MCF 10A (cell line): ENCODE measurements at regions of chrX and their contacts with region 1.

Region 1: GRCh38 chrX:100674705-100675104 is 30.7 kb downstream of the SRPX2 start:
- DNase-seq: no peak
- H3K4me3 Mint-ChIP-seq: no peak overlapping the region
- H3K27ac Mint-ChIP-seq: no peak overlapping the region
- H3K4me1 Mint-ChIP-seq: no peaks in the 10 kb centered on the region
- H3K27me3 Mint-ChIP-seq: peaks cover 55% of the 10 kb centered on the region
- CTCF ChIP-seq: no peak

Region 2: DNA sequence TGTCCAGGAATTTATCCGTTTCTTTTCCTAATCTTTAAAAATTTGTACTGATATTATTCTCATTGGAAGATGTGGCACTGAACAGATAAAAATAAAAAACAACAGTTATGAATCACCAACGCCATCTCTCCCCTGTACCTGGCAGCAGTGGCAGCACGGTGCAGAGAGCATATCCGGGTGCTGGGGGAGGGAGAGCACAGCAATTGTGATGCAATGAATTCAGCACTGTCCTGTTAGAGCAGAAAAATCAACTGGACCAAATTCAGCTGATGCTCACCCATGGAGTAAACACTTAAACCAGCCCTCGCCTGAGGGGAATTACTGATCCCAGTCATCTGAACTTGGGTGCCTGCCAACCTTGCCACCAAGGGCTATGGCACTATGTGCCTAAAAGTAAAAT is 917.0 kb before region 1 on chrX:
- CTCF ChIA-PET with region 1: no interaction called
- POLR2A ChIA-PET with region 1: no interaction called
- intact Hi-C with region 1: no loop called
- DNase-seq: peak; percentile 39
- H3K4me3 Mint-ChIP-seq: no peak overlapping the region
- H3K27ac Mint-ChIP-seq: no peak overlapping the region
- H3K4me1 Mint-ChIP-seq: no peaks in the 10 kb centered on the region
- H3K27me3 Mint-ChIP-seq: peaks cover 27% of the 10 kb centered on the region
- CTCF ChIP-seq: no peak

Region 3: GRCh38 chrX:100512471-100512870 is 162.2 kb before region 1 on chrX:
- CTCF ChIA-PET with region 1: interaction called, 15 read pairs
- POLR2A ChIA-PET with region 1: no interaction called
- intact Hi-C with region 1: no loop called
- DNase-seq: peak; percentile 38
- H3K4me3 Mint-ChIP-seq: no peak overlapping the region
- H3K27ac Mint-ChIP-seq: no peak overlapping the region
- H3K4me1 Mint-ChIP-seq: no peaks in the 10 kb centered on the region
- H3K27me3 Mint-ChIP-seq: peaks cover 49% of the 10 kb centered on the region
- CTCF ChIP-seq: peak; percentile 72

Region 4: DNA sequence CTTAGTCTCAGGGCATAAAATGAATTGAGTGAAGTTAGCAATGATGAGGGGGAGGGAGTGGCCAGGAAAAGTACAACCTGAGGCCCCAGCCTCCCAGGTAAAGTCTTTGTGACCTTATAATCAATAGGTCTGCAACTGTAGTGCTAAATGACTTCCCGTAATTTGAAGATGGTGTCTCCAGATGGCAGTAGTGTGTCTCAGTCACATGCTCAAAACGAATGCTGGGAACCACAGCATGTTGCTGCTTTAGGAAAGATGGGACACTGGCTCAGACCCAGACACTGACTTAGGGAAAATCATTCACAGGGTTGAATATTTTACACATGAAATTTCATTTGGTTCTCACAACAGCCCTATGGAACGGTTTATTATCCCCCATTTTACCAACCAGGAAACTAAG is 20.4 kb before region 1 on chrX:
- CTCF ChIA-PET with region 1: interaction called, 11 read pairs
- POLR2A ChIA-PET with region 1: interaction called, 3 read pairs
- intact Hi-C with region 1: no loop called
- DNase-seq: peak; percentile 39
- H3K4me3 Mint-ChIP-seq: no peak overlapping the region
- H3K27ac Mint-ChIP-seq: no peak overlapping the region
- H3K4me1 Mint-ChIP-seq: no peaks in the 10 kb centered on the region
- H3K27me3 Mint-ChIP-seq: peaks cover 47% of the 10 kb centered on the region
- CTCF ChIP-seq: no peak

Region 5: DNA sequence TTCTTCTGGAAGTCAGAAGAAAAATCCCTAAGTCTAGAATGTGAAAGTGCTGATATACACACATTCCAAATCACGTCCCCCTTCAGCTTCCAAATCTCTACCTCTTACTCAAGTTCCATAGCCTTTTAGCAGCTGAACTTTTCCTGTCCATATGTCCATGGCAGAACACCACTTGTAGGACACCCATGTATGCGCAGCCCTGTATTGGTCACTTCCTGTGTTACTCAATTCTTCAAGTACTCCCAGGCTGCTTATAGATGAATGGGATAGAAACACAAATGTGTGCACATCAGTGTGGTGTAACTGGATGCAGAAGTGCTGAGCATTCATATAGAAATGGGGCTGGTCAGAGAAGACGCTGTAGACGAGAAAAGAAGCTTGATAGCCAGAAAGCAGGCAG is 11.9 kb before region 1 on chrX:
- CTCF ChIA-PET with region 1: interaction called, 28 read pairs
- POLR2A ChIA-PET with region 1: no interaction called
- intact Hi-C with region 1: no loop called
- DNase-seq: peak; percentile 56
- H3K4me3 Mint-ChIP-seq: no peak overlapping the region
- H3K27ac Mint-ChIP-seq: no peak overlapping the region
- H3K4me1 Mint-ChIP-seq: no peaks in the 10 kb centered on the region
- H3K27me3 Mint-ChIP-seq: peaks cover 87% of the 10 kb centered on the region
- CTCF ChIP-seq: no peak

Region 6: DNA sequence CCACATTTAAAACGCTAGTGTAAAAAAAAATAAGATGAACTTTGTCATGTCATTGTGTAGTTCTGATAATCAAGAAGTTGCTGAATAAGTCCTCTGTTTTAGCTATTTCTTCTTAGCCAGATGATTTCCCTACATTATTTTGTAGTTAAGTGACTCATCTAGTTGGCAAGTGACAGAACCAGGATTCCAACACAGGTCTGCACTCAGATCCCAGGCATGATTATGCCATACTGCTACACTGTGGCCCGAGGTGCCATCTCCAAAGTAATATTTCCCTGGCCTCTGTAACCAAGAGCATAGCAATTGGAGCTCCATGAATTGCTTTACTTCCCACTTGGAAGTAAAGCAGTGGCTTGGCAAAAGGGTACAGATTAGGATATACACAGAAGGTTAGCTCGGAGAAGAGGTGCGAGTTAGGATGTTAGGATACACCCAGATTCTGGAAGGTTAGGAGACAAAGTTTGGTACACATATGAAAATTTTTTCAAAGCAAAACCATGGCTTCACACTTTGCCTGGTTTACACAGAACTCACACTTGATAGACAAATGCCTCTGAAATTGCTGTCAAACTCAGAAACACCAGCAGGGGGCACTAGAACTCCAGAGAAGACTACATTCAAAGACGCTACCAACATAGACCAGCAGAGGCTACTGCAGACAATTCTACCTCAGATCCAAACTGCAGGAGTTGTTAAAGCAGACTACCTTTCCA is 10.7 kb after region 1 on chrX:
- CTCF ChIA-PET with region 1: interaction called, 85 read pairs
- POLR2A ChIA-PET with region 1: interaction called, 4 read pairs
- intact Hi-C with region 1: no loop called
- DNase-seq: peak; percentile 80
- H3K4me3 Mint-ChIP-seq: no peak overlapping the region
- H3K27ac Mint-ChIP-seq: no peak overlapping the region
- H3K4me1 Mint-ChIP-seq: no peaks in the 10 kb centered on the region
- H3K27me3 Mint-ChIP-seq: peaks cover 32% of the 10 kb centered on the region
- CTCF ChIP-seq: peak; percentile 88

Region 7: GRCh38 chrX:100710816-100711215 is 36.1 kb after region 1 on chrX:
- CTCF ChIA-PET with region 1: interaction called, 12 read pairs
- POLR2A ChIA-PET with region 1: no interaction called
- intact Hi-C with region 1: no loop called
- DNase-seq: no peak
- H3K4me3 Mint-ChIP-seq: no peak overlapping the region
- H3K27ac Mint-ChIP-seq: no peak overlapping the region
- H3K4me1 Mint-ChIP-seq: no peaks in the 10 kb centered on the region
- H3K27me3 Mint-ChIP-seq: peaks cover 39% of the 10 kb centered on the region
- CTCF ChIP-seq: no peak

Region 8: DNA sequence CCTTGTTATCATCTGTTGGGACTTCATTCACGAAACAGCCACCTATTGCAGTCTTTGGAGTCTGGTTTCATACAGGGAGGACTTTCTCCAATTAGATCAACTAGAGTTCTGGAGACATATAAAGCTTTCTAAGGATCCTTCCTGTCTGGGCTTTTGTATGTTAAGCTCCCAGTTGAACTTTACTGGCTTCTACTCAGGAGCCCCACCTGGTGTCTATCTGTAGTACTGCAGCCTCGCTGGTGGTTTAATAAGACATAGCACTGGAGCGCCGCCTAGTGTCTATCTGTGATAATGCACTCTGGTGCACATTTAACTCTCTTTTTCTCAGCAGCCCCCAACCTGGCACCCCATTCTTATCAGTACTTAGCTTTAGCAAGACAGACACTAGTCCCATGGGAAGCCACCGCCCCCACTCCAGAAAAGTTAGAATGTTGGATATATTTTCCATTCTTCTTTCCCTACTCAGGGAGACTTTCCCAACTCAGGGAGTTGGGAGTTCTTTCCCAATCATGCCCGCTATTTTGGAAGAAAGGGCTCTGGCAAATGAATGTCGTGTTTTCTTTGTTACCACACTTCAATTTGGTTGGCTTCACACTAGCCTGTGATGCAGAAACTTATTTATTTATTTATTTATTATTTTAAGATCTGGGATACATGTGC is 94.1 kb after region 1 on chrX:
- CTCF ChIA-PET with region 1: interaction called, 58 read pairs
- POLR2A ChIA-PET with region 1: interaction called, 4 read pairs
- intact Hi-C with region 1: loop called (anchors 1 kb)
- DNase-seq: peak; percentile 86
- H3K4me3 Mint-ChIP-seq: no peak overlapping the region
- H3K27ac Mint-ChIP-seq: no peak overlapping the region
- H3K4me1 Mint-ChIP-seq: no peaks in the 10 kb centered on the region
- H3K27me3 Mint-ChIP-seq: peaks cover 65% of the 10 kb centered on the region
- CTCF ChIP-seq: peak; percentile 100